ENCODE measurements at regions of chr14 and their contacts with region 1.

Region 1: DNA sequence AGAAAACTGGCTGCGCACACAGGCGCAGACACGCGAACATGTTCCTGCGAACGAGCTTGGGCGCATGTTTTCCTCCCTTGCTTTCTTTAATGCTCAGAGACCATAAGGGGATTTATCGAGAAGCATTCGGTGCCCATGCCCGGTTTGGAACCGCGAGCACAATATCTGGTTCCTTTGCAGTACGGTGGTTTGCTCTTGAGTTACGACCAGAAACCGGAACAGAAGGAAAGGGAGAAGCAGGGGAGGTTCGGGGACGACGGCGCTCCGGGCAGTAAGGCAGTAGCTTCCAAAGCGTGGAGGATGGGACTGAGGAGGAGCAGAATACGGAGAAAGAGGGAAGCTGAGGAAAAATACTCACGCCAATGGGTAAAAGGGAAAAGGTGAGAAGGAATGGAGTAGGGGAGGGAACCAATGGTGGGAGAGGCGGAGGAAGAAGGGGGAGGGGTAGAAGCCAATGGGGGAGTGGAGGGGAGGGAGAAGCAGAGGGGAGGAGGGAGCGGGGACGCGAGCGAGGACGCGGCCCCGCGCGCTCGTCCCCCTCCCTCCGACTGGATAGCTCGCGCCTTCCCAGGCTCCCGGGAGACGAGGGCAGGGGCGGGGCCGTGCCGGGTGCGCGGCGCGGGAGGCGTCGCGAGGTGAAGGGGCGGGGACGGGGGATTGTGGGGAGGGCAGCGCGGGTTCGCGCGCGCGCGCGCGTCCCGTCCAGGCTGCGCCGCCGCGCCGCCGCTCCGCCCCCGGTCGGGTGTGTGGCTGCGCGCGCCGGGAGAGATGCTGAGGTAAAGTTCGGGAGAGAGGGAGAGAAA is 625 bp upstream of the ARHGAP5 start:
- DNase-seq: peak; percentile 73
- H3K4me3 Mint-ChIP-seq: peak overlapping the region; percentile 97
- H3K27ac Mint-ChIP-seq: peak overlapping the region; percentile 91
- H3K4me1 Mint-ChIP-seq: peaks cover 38% of the 10 kb centered on the region
- H3K27me3 Mint-ChIP-seq: peaks cover 23% of the 10 kb centered on the region

Region 2: GRCh38 chr14:31420319-31421111 is 656.0 kb before region 1 on chr14 and contains the start of gene HEATR5A:
- intact Hi-C with region 1: loop called (anchors 2 kb)
- DNase-seq: peak; percentile 90
- H3K4me3 Mint-ChIP-seq: peak within 1 kb of the TSS; percentile 95
- H3K27ac Mint-ChIP-seq: peak within 1 kb of the TSS; percentile 90
- H3K4me1 Mint-ChIP-seq: peaks cover 24% of the 10 kb centered on the region
- H3K27me3 Mint-ChIP-seq: no peaks in the 10 kb centered on the region
- total RNA-seq, gene HEATR5A: 23.1 TPM in 2 replicates

Region 3: DNA sequence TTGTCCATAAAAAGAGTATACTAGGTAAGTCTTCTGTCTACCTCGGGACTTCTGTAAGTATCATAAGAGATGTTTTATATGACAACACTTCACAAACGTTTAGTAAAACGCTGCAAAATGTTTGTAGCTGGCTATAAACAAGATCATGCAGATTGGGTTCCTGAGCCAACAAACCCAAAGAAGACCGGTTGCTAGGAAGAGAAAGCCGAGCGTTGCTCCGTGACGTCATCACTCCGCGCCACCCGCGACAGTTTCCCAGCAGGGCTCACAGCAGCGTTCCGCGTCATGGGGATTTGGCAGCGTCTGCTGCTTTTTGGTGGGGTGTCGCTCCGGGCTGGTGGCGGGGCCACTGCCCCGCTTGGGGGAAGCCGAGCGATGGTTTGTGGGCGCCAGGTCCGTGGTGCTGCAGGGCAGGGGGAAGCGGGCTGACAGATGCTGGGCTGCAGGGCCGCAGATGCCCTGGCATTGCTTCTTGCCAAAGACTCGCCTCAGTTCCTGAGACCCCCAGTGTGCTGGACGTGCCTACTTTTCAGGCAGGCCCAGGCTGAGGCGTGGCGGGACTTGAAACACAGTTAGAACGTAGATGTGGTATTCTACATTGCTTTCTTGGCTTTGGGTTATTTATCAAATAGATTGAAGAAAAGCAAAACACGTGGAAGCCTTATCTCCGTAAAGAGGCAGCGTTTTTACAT is 515.2 kb before region 1 on chr14 and contains the start of gene NUBPL:
- intact Hi-C with region 1: loop called (anchors 2 kb)
- DNase-seq: peak; percentile 96
- H3K4me3 Mint-ChIP-seq: peak within 1 kb of the TSS; percentile 90
- H3K27ac Mint-ChIP-seq: peak within 1 kb of the TSS; percentile 95
- H3K4me1 Mint-ChIP-seq: peaks cover 21% of the 10 kb centered on the region
- H3K27me3 Mint-ChIP-seq: peaks cover 8% of the 10 kb centered on the region
- total RNA-seq, gene NUBPL: 8.7 and 9.5 TPM in 2 replicates

Region 4: GRCh38 chr14:32102152-32102787 is 25.8 kb after region 1 on chr14:
- intact Hi-C with region 1: loop called (anchors 1 kb)
- DNase-seq: peak; percentile 24
- H3K4me3 Mint-ChIP-seq: peak overlapping the region; percentile 22
- H3K27ac Mint-ChIP-seq: peak overlapping the region; percentile 18
- H3K4me1 Mint-ChIP-seq: peaks cover 37% of the 10 kb centered on the region
- H3K27me3 Mint-ChIP-seq: no peaks in the 10 kb centered on the region

Region 5: DNA sequence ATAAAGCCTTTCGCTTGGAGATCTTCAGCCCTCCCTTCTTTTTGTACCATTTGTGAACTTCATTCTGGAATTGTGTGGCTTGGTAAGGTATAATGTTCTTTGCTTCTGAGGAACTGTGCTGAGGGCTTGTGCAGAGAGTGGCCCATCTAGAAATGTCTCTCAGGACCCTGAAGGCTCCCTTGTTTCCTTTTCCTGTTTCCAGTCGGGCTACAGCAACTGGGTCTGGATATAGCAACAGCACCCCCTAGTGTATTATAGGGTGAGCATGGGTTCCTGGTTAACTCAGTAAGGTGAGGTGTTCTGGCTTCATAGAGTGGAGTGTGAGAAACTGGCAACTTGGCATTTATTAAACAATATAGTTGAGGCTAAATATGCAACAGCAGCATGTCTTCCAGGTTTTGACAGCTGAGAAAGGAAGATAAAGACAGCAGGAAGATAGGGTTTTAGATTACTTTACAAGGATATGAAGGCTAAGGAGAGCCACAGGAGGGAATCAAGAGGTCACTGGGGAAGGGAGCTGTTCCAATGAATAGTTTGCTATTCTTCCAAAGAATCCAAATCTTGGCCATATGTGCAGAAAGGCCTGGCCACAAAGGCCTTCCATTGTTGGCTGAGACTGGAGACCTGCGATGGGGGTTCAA is 175.7 kb after region 1 on chr14:
- intact Hi-C with region 1: loop called (anchors 1 kb)
- DNase-seq: peak; percentile 28
- H3K4me3 Mint-ChIP-seq: no peak overlapping the region
- H3K27ac Mint-ChIP-seq: no peak overlapping the region
- H3K4me1 Mint-ChIP-seq: no peaks in the 10 kb centered on the region
- H3K27me3 Mint-ChIP-seq: no peaks in the 10 kb centered on the region